ENCODE measurements at regions of chr2 and their contacts with region 1.

Region 1: DNA sequence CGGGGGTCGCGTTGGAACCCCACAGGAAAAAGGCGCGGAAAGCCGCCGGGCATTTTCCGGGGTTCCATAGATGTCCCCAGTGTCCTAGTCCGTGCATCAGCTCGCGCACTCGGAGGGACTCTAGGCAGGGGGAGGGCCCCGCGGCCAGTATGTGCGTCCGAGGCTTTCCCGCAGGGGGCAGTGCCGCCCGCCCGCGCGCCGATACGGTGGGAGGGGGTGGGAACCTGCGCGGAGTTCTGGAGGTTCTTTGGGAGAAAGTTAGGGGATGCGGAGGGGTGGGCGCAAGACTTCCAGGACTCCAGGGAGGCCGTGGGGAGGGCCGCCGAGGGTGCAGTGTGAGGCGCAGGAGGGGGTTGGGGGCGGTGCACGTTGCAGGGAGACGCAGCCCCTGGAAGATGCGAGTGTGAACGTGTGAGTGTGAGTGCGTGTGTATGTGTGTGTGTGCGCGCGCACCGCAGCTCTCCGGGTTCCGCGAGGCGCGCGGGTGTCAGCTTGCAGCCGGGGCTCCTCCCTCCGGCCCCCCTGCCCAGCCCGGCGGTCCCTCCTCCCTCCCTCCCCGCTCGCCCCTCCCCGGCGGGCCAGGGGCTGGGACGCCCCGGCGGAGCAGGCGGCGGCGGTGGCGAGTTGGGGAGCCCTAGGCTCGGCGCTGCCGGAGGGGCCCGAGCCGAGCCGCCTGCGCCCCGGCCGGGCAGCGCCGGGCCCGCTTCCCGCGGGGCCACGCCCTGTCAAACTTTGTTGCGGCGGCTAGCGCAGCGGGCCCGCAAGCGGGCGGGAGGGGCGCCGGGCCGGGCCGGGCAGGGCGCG is at the start of gene TCF7L1:
- DNase-seq: peak; percentile 91 to 96
- ATAC-seq: peak; percentile 96
- H3K4me3 ChIP-seq: peak within 1 kb of the TSS; percentile 84 to 94
- H3K27ac ChIP-seq: peak within 1 kb of the TSS; percentile 29 to 61
- H3K4me1 ChIP-seq: no peaks in the 10 kb centered on the region
- H3K27me3 ChIP-seq: no peaks in the 10 kb centered on the region
- total RNA-seq, gene TCF7L1: 35.7 to 39.5 TPM

Region 2: DNA sequence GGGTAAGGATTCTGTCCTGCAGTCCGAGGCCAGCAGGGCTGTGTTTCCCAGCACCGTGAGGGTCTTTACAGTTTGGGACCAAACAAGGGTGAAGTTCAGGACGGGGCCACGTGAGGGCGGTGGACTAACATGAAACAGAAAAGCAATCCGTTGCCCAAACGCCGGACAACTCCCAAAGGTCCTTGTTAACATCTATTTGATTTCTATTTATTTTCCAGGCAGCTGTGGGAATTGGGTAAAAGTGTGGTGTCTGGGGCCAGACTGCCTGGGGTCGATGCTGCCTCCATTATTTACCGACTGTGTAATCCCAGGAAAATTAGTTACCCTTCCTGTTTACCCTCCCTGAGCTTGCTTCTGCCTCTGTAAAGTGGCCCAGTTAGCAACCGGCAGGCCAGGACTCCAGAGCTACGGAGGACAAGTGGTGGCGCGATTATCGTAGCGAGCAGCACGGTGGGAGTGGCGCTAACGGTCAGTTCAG is 66.1 kb before region 1 on chr2:
- intact Hi-C with region 1: loop called in 1 of 2 experiments (anchors 5 kb)
- DNase-seq: peak; percentile 84 to 92
- ATAC-seq: peak; percentile 84
- H3K4me3 ChIP-seq: no peak overlapping the region
- H3K27ac ChIP-seq: no peak overlapping the region
- H3K4me1 ChIP-seq: peaks cover 0 to 2% of the 10 kb centered on the region in 2 donors
- H3K27me3 ChIP-seq: no peaks in the 10 kb centered on the region

Region 3: DNA sequence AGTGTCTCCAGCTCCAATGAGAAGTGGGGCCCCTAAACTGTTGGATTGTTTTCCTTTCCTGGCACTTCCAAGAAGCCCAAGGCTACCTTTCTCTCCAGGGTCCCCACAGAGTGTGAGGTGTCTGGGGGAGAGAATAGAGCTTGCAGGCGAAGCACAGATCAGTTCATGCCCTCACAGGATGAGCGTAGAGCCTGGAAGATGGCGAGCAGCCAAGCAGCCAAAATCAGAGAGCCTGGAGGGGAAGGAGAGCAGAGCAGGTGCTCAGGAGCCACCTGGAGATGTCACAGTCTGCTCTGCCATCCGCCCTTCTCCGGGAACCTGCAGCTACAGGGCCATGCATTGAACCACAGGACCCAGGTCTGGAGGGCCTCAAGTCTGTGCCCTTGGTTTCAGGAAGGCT is 54.5 kb before region 1 on chr2:
- intact Hi-C with region 1: no loop called
- DNase-seq: no peak
- ATAC-seq: no peak
- H3K4me3 ChIP-seq: no peak overlapping the region
- H3K27ac ChIP-seq: no peak overlapping the region
- H3K4me1 ChIP-seq: no peaks in the 10 kb centered on the region
- H3K27me3 ChIP-seq: peaks cover 0 to 6% of the 10 kb centered on the region in 2 donors

Region 4: DNA sequence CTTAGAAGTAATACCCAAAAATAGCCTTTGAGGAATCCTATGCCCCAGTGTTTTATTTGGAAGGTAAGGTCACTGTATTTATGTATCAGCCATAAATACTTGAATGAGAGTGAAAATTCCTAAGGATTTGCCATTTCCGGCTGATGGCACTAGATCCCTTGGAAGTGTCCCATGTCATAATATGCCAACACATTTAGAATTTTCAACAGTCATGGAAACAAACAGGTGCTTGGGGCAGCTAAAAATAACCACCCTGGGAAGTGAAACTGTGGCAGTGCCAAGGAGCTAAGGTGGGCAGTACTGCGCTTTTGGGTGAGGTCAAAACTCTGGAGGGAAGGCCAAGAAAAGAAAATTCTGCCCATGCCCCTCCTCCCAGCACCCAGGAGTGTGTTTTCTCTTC is 80.4 kb after region 1 on chr2:
- intact Hi-C with region 1: no loop called
- DNase-seq: no peak
- ATAC-seq: no peak
- H3K4me3 ChIP-seq: no peak overlapping the region
- H3K27ac ChIP-seq: no peak overlapping the region
- H3K4me1 ChIP-seq: peaks cover 0 to 6% of the 10 kb centered on the region in 2 donors
- H3K27me3 ChIP-seq: no peaks in the 10 kb centered on the region

Region 5: DNA sequence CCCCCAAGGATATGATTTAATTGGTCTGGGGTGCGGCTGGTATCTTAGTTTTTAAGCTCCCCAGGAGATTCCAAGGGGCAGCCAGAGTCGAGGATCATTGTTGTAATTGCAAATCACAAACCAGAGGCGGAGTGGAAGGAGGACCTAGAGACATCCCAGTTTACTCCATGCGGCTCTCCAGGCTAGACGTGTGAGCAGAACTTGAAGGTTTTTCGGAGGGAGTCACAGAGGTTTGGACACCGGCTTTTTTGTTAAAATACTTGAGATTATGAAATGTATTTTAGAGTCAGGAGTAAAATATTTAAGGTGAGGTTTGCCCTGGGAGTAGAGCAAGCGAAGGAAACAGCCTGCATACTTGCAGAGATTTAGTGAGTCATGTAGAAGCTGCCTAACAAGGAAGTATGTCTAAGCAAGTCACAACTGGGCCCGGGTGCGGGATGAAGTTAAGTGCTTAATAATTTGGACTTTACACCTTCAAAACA is 155.2 kb after region 1 on chr2:
- intact Hi-C with region 1: loop called (anchors 1 to 2 kb)
- DNase-seq: peak in 1 of 2 donors; percentile 36
- ATAC-seq: no peak
- H3K4me3 ChIP-seq: no peak overlapping the region
- H3K27ac ChIP-seq: no peak overlapping the region
- H3K4me1 ChIP-seq: no peaks in the 10 kb centered on the region
- H3K27me3 ChIP-seq: no peaks in the 10 kb centered on the region